AG04449 (cell line): ENCODE measurements at regions of chr19 and their contacts with region 1.

Region 1: GRCh38 chr19:48333467-48334384 is 8.4 kb downstream of the EMP3 start:
- DNase-seq: no peak
- H3K4me3 ChIP-seq: peak overlapping the region; percentile 58
- CTCF ChIP-seq: peak; percentile 96

Region 2: DNA sequence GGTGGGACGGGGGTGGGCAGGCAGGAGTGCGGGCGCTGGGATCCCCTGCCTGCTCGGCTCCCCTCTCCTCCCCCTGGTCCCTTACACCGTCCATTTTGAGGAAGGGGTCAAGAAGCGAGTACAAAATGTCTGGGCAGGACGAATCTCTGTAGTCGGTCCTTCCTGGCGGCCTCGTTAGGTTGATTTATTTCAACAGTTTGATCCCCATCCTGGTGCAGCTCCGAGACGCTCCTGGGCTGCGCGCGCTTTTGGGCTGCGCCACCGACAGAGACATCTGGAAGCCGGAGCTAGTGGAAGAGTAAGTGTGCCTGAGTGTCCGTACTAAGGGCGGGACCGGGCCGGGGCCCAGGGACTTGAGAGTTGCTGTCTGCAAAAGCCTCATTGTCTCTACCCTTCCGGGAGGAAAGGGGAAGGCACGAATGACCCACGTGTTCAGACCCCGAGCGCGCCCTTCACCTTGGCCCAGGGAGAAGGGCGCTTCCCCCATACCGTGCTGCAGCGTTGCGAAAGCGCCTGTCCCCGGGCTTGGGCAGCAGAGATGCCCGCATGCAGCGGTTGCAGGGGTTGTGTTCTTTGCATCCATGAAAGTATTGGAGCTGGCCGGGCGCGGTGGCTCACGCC is 62.1 kb before region 1 on chr19:
- CTCF ChIA-PET with region 1: interaction called, 76 read pairs
- POLR2A ChIA-PET with region 1: interaction called, 4 read pairs
- DNase-seq: no peak
- H3K4me3 ChIP-seq: peak overlapping the region; percentile 58
- CTCF ChIP-seq: no peak

Region 3: GRCh38 chr19:48308631-48309586 is 24.8 kb before region 1 on chr19:
- CTCF ChIA-PET with region 1: interaction called, 18 read pairs
- POLR2A ChIA-PET with region 1: no interaction called
- DNase-seq: no peak
- H3K4me3 ChIP-seq: no peak overlapping the region
- CTCF ChIP-seq: peak; percentile 64

Region 4: GRCh38 chr19:48321622-48322591 is 11.8 kb before region 1 on chr19:
- CTCF ChIA-PET with region 1: interaction called, 213 read pairs
- POLR2A ChIA-PET with region 1: interaction called, 15 read pairs
- DNase-seq: peak; percentile 86
- H3K4me3 ChIP-seq: peak overlapping the region; percentile 67
- CTCF ChIP-seq: no peak

Region 5: GRCh38 chr19:48591021-48591420 is 257.3 kb after region 1 on chr19:
- CTCF ChIA-PET with region 1: no interaction called
- POLR2A ChIA-PET with region 1: no interaction called
- DNase-seq: no peak
- H3K4me3 ChIP-seq: no peak overlapping the region
- CTCF ChIP-seq: no peak